ENCODE measurements at regions of chr1 and their contacts with region 1.

Region 1: GRCh38 chr1:1307908-1308755 is at the starts of genes ACAP3 and PUSL1:
- DNase-seq: peak; percentile 92
- ATAC-seq: peak; percentile 70
- H3K4me3 ChIP-seq: peak within 1 kb of the TSS; percentile 95
- H3K27ac ChIP-seq: peak within 1 kb of the TSS; percentile 94
- H3K4me1 ChIP-seq: peaks cover 31% of the 10 kb centered on the region
- H3K27me3 ChIP-seq: no peaks in the 10 kb centered on the region
- CTCF ChIP-seq: no peak
- POLR2A ChIP-seq: peak; percentile 69
- RAD21 ChIP-seq: no peak
- total RNA-seq, gene ACAP3: 13.3 and 15.3 TPM in 2 replicates
- total RNA-seq, gene PUSL1: 10.9 and 13.3 TPM in 2 replicates

Region 2: GRCh38 chr1:1358433-1359261 is 50.5 kb after region 1 on chr1 and contains the start of gene MXRA8:
- CTCF ChIA-PET with region 1: no interaction called
- POLR2A ChIA-PET with region 1: no interaction called
- dilution Hi-C with region 1: no loop called
- in situ Hi-C with region 1: no loop called
- intact Hi-C with region 1: loop called (anchors 5 kb)
- DNase-seq: peak; percentile 82
- ATAC-seq: peak; percentile 59
- H3K4me3 ChIP-seq: peak within 1 kb of the TSS; percentile 74
- H3K27ac ChIP-seq: peak within 1 kb of the TSS; percentile 96
- H3K4me1 ChIP-seq: peaks cover 35% of the 10 kb centered on the region
- H3K27me3 ChIP-seq: no peaks in the 10 kb centered on the region
- CTCF ChIP-seq: no peak
- POLR2A ChIP-seq: peak; percentile 65; the same call in 1 of the 2 replicates
- RAD21 ChIP-seq: no peak
- total RNA-seq, gene MXRA8: 92.5 and 97.8 TPM in 2 replicates

Measured in IMR-90 (cell line).